Activated T-helper 1 cell treated with anti-CD3 and anti-CD28 coated beads, Interleukin-12 subunit alpha, Interleukin-12 subunit beta, Interleukin-2, Interleukin-4 antibody, amounts not matched to agents 30 ng/mL and 10 ng/mL and 1 ng/mL, durations not matched to agents 14 hours and 24 hours and 36 hours (primary cell): ENCODE measurements at regions of chr20 and their contacts with region 1.

Region 1: GRCh38 chr20:330233-331149 is 5.1 kb downstream of the SOX12 start:
- DNase-seq: peak; percentile 44
- H3K4me3 Mint-ChIP-seq: no peak overlapping the region
- H3K27ac Mint-ChIP-seq: no peak overlapping the region
- H3K4me1 Mint-ChIP-seq: peaks cover 18% of the 10 kb centered on the region
- H3K27me3 Mint-ChIP-seq: peaks cover 3% of the 10 kb centered on the region

Region 2: GRCh38 chr20:208942-209566 is 121.4 kb before region 1 on chr20:
- intact Hi-C with region 1: loop called (anchors 1 kb)
- DNase-seq: peak; percentile 8
- H3K4me3 Mint-ChIP-seq: no peak overlapping the region
- H3K27ac Mint-ChIP-seq: no peak overlapping the region
- H3K4me1 Mint-ChIP-seq: no peaks in the 10 kb centered on the region
- H3K27me3 Mint-ChIP-seq: peaks cover 10% of the 10 kb centered on the region

Region 3: DNA sequence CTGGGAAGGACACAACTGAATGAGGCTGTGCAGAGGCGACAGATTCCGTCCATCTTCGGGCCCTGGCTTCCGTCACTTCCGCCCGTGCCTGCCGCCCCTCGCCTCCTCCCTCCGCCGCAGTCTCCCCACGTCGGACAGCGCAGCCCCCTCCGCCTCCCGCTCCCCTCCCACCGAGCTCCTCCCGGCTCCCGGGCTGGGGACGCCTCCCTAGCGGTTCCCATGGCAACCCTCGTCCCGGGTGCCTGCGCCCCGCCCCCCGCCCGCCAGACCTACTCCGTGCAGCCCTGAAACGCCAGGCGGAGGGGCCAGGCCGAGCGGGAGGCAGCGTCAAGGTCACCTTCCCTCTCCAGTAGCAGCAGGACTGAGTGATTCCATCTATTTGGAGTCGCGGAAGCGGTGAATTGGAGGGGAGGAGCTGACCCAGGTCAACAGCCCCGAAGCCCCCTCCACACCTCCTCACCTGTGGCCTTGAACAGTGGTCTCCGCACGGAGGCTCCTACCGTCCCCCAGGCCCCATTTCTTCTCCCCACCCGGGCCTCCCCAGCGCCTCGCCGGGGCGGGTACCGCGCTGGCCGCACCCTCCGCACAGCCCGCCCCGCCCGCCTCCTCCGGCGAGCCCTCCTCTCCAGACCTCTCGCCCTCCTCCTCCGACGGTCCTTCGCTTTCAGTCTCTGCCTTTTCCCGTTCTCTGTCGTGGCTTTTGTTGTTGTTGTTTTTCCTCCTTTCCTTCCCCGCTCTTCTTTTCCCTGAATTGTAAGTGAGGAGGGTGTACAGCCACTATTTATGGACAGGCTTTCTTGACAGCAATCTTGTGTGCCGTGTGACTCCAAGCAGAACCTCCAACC is 17.4 kb after region 1 on chr20:
- intact Hi-C with region 1: loop called (anchors 1 kb)
- DNase-seq: peak; percentile 56
- H3K4me3 Mint-ChIP-seq: peak overlapping the region; percentile 92
- H3K27ac Mint-ChIP-seq: peak overlapping the region; percentile 79
- H3K4me1 Mint-ChIP-seq: peaks cover 25% of the 10 kb centered on the region
- H3K27me3 Mint-ChIP-seq: peaks cover 4% of the 10 kb centered on the region

Region 4: DNA sequence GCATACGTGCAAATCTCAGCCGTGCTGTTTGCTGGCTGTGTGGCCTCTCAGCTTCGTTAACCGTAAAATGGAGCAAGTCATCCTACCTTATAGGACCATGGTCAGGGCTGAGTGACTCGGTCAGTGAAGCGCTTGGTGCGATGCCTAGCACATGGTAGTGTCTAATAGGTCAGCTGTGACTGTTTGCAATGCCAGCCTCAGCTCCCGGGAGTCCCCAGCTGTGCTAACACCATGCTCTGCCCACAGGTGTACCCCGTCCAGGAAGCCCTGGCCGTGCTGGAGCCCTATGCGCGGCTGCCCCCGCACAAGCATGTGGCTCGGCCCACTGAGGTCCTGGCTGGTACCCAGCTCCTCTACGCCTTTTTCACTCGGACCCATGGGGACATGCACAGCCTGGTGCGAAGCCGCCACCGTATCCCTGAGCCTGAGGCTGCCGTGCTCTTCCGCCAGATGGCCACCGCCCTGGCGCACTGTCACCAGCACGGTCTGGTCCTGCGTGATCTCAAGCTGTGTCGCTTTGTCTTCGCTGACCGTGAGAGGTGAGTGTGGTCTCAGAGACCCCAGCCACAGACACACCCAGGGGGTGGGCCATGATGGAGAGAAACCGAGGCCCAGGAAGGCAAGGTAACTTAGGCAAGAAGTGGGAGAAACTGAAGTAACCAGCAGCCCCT is 60.7 kb after region 1 on chr20:
- intact Hi-C with region 1: no loop called
- DNase-seq: no peak
- H3K4me3 Mint-ChIP-seq: no peak overlapping the region
- H3K27ac Mint-ChIP-seq: no peak overlapping the region
- H3K4me1 Mint-ChIP-seq: peaks cover 7% of the 10 kb centered on the region
- H3K27me3 Mint-ChIP-seq: no peaks in the 10 kb centered on the region

Region 5: DNA sequence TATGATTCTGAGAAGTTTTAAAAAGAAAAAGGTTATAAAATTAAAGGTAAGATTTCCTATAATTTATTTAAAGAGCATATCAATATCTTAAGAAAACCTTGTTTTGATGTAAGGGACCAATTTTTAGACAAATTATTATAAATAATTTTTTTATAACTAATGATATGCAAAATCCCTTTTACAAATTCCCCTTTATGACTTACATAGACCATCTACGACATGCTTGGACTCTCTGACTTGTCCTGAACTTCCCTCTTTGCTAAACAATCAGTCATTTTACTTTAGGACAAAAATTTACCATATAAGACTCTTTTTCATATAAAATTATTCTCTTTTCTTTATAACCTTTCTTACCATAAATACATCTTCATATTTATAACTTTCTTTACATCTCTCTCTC is 600.9 kb after region 1 on chr20:
- intact Hi-C with region 1: no loop called
- DNase-seq: no peak
- H3K4me3 Mint-ChIP-seq: no peak overlapping the region
- H3K27ac Mint-ChIP-seq: no peak overlapping the region
- H3K4me1 Mint-ChIP-seq: no peaks in the 10 kb centered on the region
- H3K27me3 Mint-ChIP-seq: peaks cover 3% of the 10 kb centered on the region